ENCODE measurements at regions of chr3 and their contacts with region 1.

Region 1: DNA sequence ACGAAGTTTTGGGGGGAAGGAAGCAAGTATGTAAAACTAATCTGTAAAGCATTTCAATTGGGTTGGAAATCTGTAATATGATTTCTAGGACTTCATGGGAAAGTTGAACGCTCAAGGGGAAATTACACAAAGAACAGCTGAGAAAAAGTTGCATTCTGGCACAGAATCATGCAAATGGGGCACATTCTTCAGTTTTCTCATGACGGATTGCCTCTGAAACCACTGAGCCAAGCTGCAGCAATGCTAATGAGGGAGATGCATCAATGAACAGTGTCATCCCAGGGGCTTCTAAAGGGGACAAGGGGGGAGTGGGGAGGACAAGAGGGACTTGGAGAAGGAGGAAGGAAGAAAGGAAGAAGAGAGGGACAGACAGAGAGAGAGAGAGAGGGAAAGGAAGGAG is 291.4 kb upstream of the ATP11B start:
- DNase-seq: no peak
- ATAC-seq: no peak
- H3K4me3 ChIP-seq: no peak overlapping the region
- H3K27ac ChIP-seq: no peak overlapping the region
- H3K4me1 ChIP-seq: no peaks in the 10 kb centered on the region
- H3K27me3 ChIP-seq: no peaks in the 10 kb centered on the region; a peak in 1 of 4 replicates
- CTCF ChIP-seq: no peak
- EP300 ChIP-seq: no peak
- POLR2A ChIP-seq: no peak
- RAD21 ChIP-seq: no peak

Region 2: GRCh38 chr3:182469086-182469485 is 32.8 kb before region 1 on chr3:
- CTCF ChIA-PET with region 1: no interaction called
- POLR2A ChIA-PET with region 1: no interaction called
- RAD21 ChIA-PET with region 1: no interaction called
- SMC1A ChIA-PET with region 1: no interaction called
- in situ Hi-C with region 1: no loop called
- intact Hi-C with region 1: no loop called
- DNase-seq: no peak
- ATAC-seq: no peak
- H3K4me3 ChIP-seq: no peak overlapping the region
- H3K27ac ChIP-seq: no peak overlapping the region
- H3K4me1 ChIP-seq: no peaks in the 10 kb centered on the region
- H3K27me3 ChIP-seq: peaks cover 0 to 2% of the 10 kb centered on the region in 2 experiments; a peak in 2 of 4 replicates
- CTCF ChIP-seq: no peak
- EP300 ChIP-seq: no peak
- POLR2A ChIP-seq: no peak
- RAD21 ChIP-seq: no peak

Region 3: GRCh38 chr3:182490596-182491491 is 11.0 kb before region 1 on chr3:
- CTCF ChIA-PET with region 1: interaction called, 5 read pairs
- POLR2A ChIA-PET with region 1: no interaction called
- RAD21 ChIA-PET with region 1: no interaction called
- SMC1A ChIA-PET with region 1: interaction called, 12 read pairs
- in situ Hi-C with region 1: no loop called
- intact Hi-C with region 1: no loop called
- DNase-seq: no peak
- ATAC-seq: peak; percentile 65
- H3K4me3 ChIP-seq: no peak overlapping the region
- H3K27ac ChIP-seq: no peak overlapping the region
- H3K4me1 ChIP-seq: no peaks in the 10 kb centered on the region
- H3K27me3 ChIP-seq: no peaks in the 10 kb centered on the region; a peak in 1 of 4 replicates
- CTCF ChIP-seq: peak; percentile 30 to 51 (median 33); a peak in 4 of 6 replicates
- EP300 ChIP-seq: no peak
- POLR2A ChIP-seq: no peak
- RAD21 ChIP-seq: peak; percentile 30

Region 4: GRCh38 chr3:182514236-182514964 is 12.5 kb after region 1 on chr3:
- CTCF ChIA-PET with region 1: interaction called, 8 read pairs
- POLR2A ChIA-PET with region 1: interaction called, 3 read pairs
- RAD21 ChIA-PET with region 1: interaction called, 3 read pairs
- SMC1A ChIA-PET with region 1: interaction called, 95 read pairs
- in situ Hi-C with region 1: no loop called
- intact Hi-C with region 1: no loop called
- DNase-seq: no peak
- ATAC-seq: no peak
- H3K4me3 ChIP-seq: no peak overlapping the region
- H3K27ac ChIP-seq: no peak overlapping the region
- H3K4me1 ChIP-seq: no peaks in the 10 kb centered on the region
- H3K27me3 ChIP-seq: no peaks in the 10 kb centered on the region; a peak in 1 of 4 replicates
- CTCF ChIP-seq: no peak
- EP300 ChIP-seq: no peak
- POLR2A ChIP-seq: no peak
- RAD21 ChIP-seq: no peak